Activated CD4-positive, alpha-beta T cell treated with anti-CD3 and anti-CD28 coated beads for 36 hours (primary cell): ENCODE measurements at regions of chr2 and their contacts with region 1.

Region 1: GRCh38 chr2:216034065-216034464 is 20.7 kb upstream of the MREG start:
- DNase-seq: peak; percentile 90
- ATAC-seq: peak; percentile 47
- H3K4me3 Mint-ChIP-seq: no peak overlapping the region
- H3K27ac Mint-ChIP-seq: no peak overlapping the region
- H3K4me1 Mint-ChIP-seq: peaks cover 42% of the 10 kb centered on the region
- H3K27me3 Mint-ChIP-seq: no peaks in the 10 kb centered on the region

Region 2: DNA sequence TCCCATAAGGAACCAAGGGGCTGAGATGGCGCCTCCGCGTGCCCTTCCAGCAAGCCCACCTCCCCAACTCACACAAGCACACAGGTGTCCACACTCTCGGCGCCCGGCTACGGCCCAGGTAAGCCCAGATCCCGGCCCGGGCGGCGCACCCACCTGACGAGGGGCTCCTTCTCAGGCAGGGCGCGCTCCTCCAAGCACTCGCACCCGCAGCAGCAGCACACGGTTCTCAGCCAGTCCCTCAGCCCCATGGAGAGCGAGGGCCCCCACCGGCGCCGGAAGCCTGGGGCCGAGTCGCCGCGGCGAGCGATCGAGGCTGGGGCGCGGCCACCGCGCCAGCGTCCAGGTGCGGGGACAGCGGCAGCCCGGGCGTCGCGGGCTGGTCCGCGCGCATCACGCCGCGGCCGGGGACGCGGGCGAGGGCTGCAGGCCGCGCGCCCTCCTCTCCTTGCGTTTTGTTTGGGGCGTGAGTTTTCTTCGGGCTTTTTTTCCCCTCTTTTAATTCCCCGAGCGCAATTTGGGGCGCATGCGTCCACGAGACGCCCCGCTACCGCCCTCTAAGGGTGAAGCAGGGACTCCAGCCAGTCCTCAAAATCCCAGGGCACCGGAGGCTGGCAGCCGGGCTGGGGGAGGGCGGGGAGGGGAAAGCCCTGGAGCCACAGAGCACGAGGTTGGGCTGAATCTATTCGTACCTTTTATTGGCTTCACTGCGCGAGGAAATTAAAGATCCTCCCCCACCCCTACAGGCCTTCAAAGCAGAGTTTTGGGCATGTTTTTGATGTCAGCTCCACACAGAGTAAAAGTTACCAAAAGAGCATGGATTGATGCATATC is 20.8 kb before region 1 on chr2 and contains the start of gene MREG:
- CTCF ChIA-PET with region 1: interaction called, 52 read pairs
- POLR2A ChIA-PET with region 1: interaction called, 3 read pairs
- intact Hi-C with region 1: loop called (anchors 1 to 2 kb)
- DNase-seq: peak; percentile 94
- ATAC-seq: peak; percentile 70
- H3K4me3 Mint-ChIP-seq: peak within 1 kb of the TSS; percentile 88
- H3K27ac Mint-ChIP-seq: peak within 1 kb of the TSS; percentile 81
- H3K4me1 Mint-ChIP-seq: peaks cover 60% of the 10 kb centered on the region
- H3K27me3 Mint-ChIP-seq: no peaks in the 10 kb centered on the region
- total RNA-seq, gene MREG: 9.1 to 9.8 TPM

Region 3: GRCh38 chr2:216057688-216058193 is 23.7 kb after region 1 on chr2:
- CTCF ChIA-PET with region 1: interaction called, 10 read pairs
- POLR2A ChIA-PET with region 1: no interaction called
- intact Hi-C with region 1: loop called in 1 of 2 experiments (anchors 2 kb)
- DNase-seq: peak; percentile 72
- ATAC-seq: peak; percentile 95
- H3K4me3 Mint-ChIP-seq: peak overlapping the region; percentile 63
- H3K27ac Mint-ChIP-seq: peak overlapping the region; percentile 93
- H3K4me1 Mint-ChIP-seq: peaks cover 27% of the 10 kb centered on the region
- H3K27me3 Mint-ChIP-seq: no peaks in the 10 kb centered on the region

Region 4: GRCh38 chr2:216139884-216140283 is 105.8 kb after region 1 on chr2:
- CTCF ChIA-PET with region 1: interaction called, 3 read pairs
- POLR2A ChIA-PET with region 1: no interaction called
- intact Hi-C with region 1: loop called in 1 of 2 experiments (anchors 1 kb)
- DNase-seq: peak; percentile 56
- ATAC-seq: peak; percentile 42
- H3K4me3 Mint-ChIP-seq: no peak overlapping the region
- H3K27ac Mint-ChIP-seq: no peak overlapping the region
- H3K4me1 Mint-ChIP-seq: peaks cover 34% of the 10 kb centered on the region
- H3K27me3 Mint-ChIP-seq: no peaks in the 10 kb centered on the region

Region 5: GRCh38 chr2:216350214-216350789 is 316.2 kb after region 1 on chr2:
- CTCF ChIA-PET with region 1: interaction called, 3 read pairs
- POLR2A ChIA-PET with region 1: no interaction called
- intact Hi-C with region 1: loop called in 1 of 2 experiments (anchors 5 kb)
- DNase-seq: peak; percentile 61
- ATAC-seq: peak; percentile 61
- H3K4me3 Mint-ChIP-seq: no peak overlapping the region
- H3K27ac Mint-ChIP-seq: no peak overlapping the region
- H3K4me1 Mint-ChIP-seq: peaks cover 88% of the 10 kb centered on the region
- H3K27me3 Mint-ChIP-seq: no peaks in the 10 kb centered on the region

Region 6: GRCh38 chr2:216394881-216395280 is 360.8 kb after region 1 on chr2:
- CTCF ChIA-PET with region 1: no interaction called
- POLR2A ChIA-PET with region 1: no interaction called
- intact Hi-C with region 1: no loop called
- DNase-seq: no peak
- ATAC-seq: no peak
- H3K4me3 Mint-ChIP-seq: no peak overlapping the region
- H3K27ac Mint-ChIP-seq: no peak overlapping the region
- H3K4me1 Mint-ChIP-seq: peaks cover 6% of the 10 kb centered on the region
- H3K27me3 Mint-ChIP-seq: no peaks in the 10 kb centered on the region